Activated T-helper 1 cell treated with anti-CD3 and anti-CD28 coated beads, Interleukin-12 subunit alpha, Interleukin-12 subunit beta, Interleukin-2, Interleukin-4 antibody, amounts not matched to agents 30 ng/mL and 10 ng/mL and 1 ng/mL, durations not matched to agents 14 hours and 24 hours and 36 hours (primary cell): ENCODE measurements at regions of chrX and their contacts with region 1.

Region 1: GRCh38 chrX:74536152-74536831 is 78.1 kb downstream of the RLIM start:
- DNase-seq: peak; percentile 7
- H3K4me3 Mint-ChIP-seq: peak overlapping the region; percentile 77
- H3K27ac Mint-ChIP-seq: peak overlapping the region; percentile 23
- H3K4me1 Mint-ChIP-seq: peaks cover 37% of the 10 kb centered on the region
- H3K27me3 Mint-ChIP-seq: no peaks in the 10 kb centered on the region

Region 2: GRCh38 chrX:74147439-74147838 is 388.9 kb before region 1 on chrX:
- intact Hi-C with region 1: no loop called
- DNase-seq: no peak
- H3K4me3 Mint-ChIP-seq: no peak overlapping the region
- H3K27ac Mint-ChIP-seq: no peak overlapping the region
- H3K4me1 Mint-ChIP-seq: no peaks in the 10 kb centered on the region
- H3K27me3 Mint-ChIP-seq: peaks cover 6% of the 10 kb centered on the region

Region 3: DNA sequence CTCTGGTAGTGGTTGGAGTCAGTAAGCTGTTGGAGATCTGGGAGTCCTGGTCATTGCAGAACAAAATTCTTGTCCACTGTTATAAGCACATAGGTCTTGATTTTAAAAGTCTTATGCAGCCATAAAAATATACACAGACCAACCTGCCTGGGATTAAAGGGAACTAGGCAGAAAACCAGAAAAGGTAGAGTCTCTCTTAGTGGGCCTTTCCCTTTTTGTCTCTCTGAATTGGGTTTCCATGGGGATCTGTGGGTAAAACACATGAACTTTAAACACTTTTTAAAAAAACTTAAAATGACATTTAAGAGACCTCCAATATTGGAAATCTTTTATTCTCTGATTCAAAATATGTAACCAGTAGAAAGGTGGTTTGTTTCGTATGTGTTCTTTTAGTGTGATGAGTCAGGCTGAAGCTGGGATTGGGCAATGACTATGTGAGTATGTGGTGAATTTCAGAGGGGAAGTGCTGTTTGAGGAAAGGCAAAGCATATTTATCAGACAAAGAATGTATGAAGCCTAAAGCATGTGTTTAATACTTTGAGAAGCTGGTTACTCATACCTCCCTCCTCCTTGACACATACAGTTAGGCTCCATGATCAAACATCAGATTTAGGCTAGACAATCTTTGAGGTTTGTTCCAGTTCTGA is 85.4 kb before region 1 on chrX:
- intact Hi-C with region 1: loop called (anchors 1 kb)
- DNase-seq: no peak
- H3K4me3 Mint-ChIP-seq: no peak overlapping the region
- H3K27ac Mint-ChIP-seq: no peak overlapping the region
- H3K4me1 Mint-ChIP-seq: no peaks in the 10 kb centered on the region
- H3K27me3 Mint-ChIP-seq: peaks cover 2% of the 10 kb centered on the region

Region 4: DNA sequence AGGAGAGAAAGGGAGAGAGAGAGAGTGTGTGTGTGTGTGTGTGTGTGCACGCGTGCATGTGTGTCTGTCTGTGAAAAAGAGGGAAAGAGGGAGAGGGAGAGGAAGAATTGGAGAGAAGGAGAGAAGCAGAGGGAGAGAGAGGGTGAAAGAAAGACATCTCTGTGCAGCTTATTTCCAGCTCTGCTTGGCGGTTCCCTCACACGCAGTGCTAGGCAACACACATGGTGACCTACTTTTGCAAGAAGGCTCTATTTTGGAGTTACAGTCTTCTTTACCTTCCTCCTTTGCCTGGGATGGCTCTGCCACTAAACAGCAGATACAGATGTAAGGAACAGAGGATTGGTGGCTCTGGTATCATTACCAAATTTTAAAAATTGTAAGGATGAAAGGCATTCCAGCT is 74.9 kb before region 1 on chrX:
- intact Hi-C with region 1: no loop called
- DNase-seq: no peak
- H3K4me3 Mint-ChIP-seq: no peak overlapping the region
- H3K27ac Mint-ChIP-seq: no peak overlapping the region
- H3K4me1 Mint-ChIP-seq: no peaks in the 10 kb centered on the region
- H3K27me3 Mint-ChIP-seq: no peaks in the 10 kb centered on the region

Region 5: GRCh38 chrX:74579597-74580198 is 43.4 kb after region 1 on chrX:
- intact Hi-C with region 1: loop called (anchors 2 kb)
- DNase-seq: no peak
- H3K4me3 Mint-ChIP-seq: no peak overlapping the region
- H3K27ac Mint-ChIP-seq: peak overlapping the region; percentile 55
- H3K4me1 Mint-ChIP-seq: peaks cover under 1% of the 10 kb centered on the region
- H3K27me3 Mint-ChIP-seq: no peaks in the 10 kb centered on the region